ENCODE measurements at regions of chr5 and their contacts with region 1.

Region 1: GRCh38 chr5:67620424-67621397 is 424.1 kb upstream of the CD180 start:
- DNase-seq: no peak
- ATAC-seq: no peak
- H3K4me3 ChIP-seq: no peak overlapping the region
- H3K27ac ChIP-seq: no peak overlapping the region
- H3K4me1 ChIP-seq: peaks cover 0 to 17% (median 4%) of the 10 kb centered on the region in 12 donors
- H3K27me3 ChIP-seq: no peaks in the 10 kb centered on the region
- CTCF ChIP-seq: no peak
- POLR2A ChIP-seq: no peak

Region 2: DNA sequence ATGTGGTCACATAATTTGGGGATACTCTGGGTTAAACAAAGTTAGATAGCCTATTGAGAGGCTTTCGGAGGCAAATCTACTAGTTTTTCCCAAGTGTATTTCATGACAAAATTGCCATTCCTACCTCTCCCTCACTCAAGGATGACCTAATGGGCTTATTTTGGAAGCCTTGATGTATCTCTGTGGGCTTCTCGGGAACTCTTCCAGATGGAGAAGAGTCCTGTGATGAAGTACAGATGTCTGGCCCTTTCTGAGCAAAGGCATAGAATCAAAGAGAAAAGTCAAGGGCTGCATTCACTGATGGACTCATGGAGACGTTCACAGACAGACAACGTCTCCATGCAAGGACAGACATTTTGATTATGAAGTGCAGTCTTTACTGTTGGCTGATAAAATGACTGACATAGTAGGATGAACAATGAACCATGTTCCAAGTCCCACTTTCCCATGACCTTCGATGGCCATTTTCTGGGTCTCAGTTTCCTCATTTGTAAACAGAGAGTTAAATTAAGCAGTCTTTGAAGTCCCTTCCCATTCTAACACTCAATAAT is 76.9 kb before region 1 on chr5:
- intact Hi-C with region 1: loop called in 1 of 10 experiments (anchors 10 kb)
- DNase-seq: no peak
- ATAC-seq: peak in 2 of 4 donors; percentile 52 to 66
- H3K4me3 ChIP-seq: no peak overlapping the region
- H3K27ac ChIP-seq: no peak overlapping the region
- H3K4me1 ChIP-seq: peaks cover 0 to 16% (median 3%) of the 10 kb centered on the region in 12 donors
- H3K27me3 ChIP-seq: no peaks in the 10 kb centered on the region
- CTCF ChIP-seq: no peak
- POLR2A ChIP-seq: no peak

Region 3: GRCh38 chr5:67669916-67670315 is 49.2 kb after region 1 on chr5:
- intact Hi-C with region 1: loop called in 1 of 10 experiments (anchors 5 kb)
- DNase-seq: no peak
- ATAC-seq: no peak
- H3K4me3 ChIP-seq: no peak overlapping the region
- H3K27ac ChIP-seq: no peak overlapping the region
- H3K4me1 ChIP-seq: peaks cover 0 to 6% (median 0%) of the 10 kb centered on the region in 12 donors
- H3K27me3 ChIP-seq: no peaks in the 10 kb centered on the region
- CTCF ChIP-seq: no peak
- POLR2A ChIP-seq: no peak